ENCODE measurements at regions of chr7 and their contacts with region 1.

Region 1: GRCh38 chr7:65448816-65449504 is 75.3 kb downstream of the ZNF92 start:
- DNase-seq: no peak
- ATAC-seq: peak; percentile 28
- H3K4me3 ChIP-seq: no peak overlapping the region
- H3K4me3 Mint-ChIP-seq: no peak overlapping the region
- H3K27ac ChIP-seq: no peak overlapping the region
- H3K27ac Mint-ChIP-seq: no peak overlapping the region
- H3K4me1 ChIP-seq: peaks cover 0 to 8% of the 10 kb centered on the region in 2 donors
- H3K4me1 Mint-ChIP-seq: peaks cover 25% of the 10 kb centered on the region
- H3K27me3 ChIP-seq: no peaks in the 10 kb centered on the region
- H3K27me3 Mint-ChIP-seq: peaks cover 4% of the 10 kb centered on the region
- CTCF ChIP-seq: no peak

Region 2: DNA sequence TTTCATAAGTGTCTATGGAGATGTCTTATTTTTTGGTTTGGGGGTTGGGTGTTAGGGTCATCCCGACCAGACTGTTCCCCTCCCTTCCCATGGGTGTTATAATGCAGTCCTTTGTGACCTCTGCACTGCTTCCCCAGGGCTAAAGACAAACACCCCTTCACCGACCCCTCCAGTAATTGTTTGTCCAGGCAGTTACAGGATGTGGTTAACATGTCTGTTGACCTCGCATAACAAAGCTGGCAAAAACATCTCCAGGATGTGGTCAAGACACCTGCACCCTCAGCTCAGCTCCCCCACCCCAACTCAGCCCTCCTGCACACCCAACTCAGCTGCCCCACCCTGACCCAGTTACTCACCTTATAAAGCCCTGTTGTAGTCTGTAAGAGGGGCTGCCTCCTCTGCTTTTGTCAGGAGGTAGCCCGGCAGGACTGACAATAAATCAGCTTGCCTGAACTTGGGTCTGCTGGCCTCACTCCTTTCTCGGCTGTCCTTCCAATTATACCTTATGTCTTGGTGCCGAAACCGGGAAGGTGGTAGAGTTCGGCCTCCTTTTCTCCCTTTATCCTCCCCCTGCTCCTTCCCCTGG is 26.9 kb after region 1 on chr7:
- CTCF ChIA-PET with region 1: no interaction called
- POLR2A ChIA-PET with region 1: interaction called, 10 read pairs
- intact Hi-C with region 1: no loop called
- DNase-seq: peak; percentile 68
- ATAC-seq: peak; percentile 90
- H3K4me3 ChIP-seq: peak overlapping the region in 2 of 5 experiments; percentile 8 to 49
- H3K4me3 Mint-ChIP-seq: peak overlapping the region; percentile 73
- H3K27ac ChIP-seq: peak overlapping the region; percentile 77 to 82
- H3K27ac Mint-ChIP-seq: peak overlapping the region; percentile 99
- H3K4me1 ChIP-seq: peaks cover 57 to 76% of the 10 kb centered on the region in 2 donors
- H3K4me1 Mint-ChIP-seq: peaks cover 81% of the 10 kb centered on the region
- H3K27me3 ChIP-seq: no peaks in the 10 kb centered on the region
- H3K27me3 Mint-ChIP-seq: no peaks in the 10 kb centered on the region
- CTCF ChIP-seq: no peak

Region 3: GRCh38 chr7:65509368-65510186 is 60.6 kb after region 1 on chr7:
- CTCF ChIA-PET with region 1: no interaction called
- POLR2A ChIA-PET with region 1: no interaction called
- intact Hi-C with region 1: loop called (anchors 10 kb)
- DNase-seq: peak; percentile 67
- ATAC-seq: no peak
- H3K4me3 ChIP-seq: peak overlapping the region in 4 of 5 experiments; percentile 54 to 69 (median 62)
- H3K4me3 Mint-ChIP-seq: peak overlapping the region; percentile 84
- H3K27ac ChIP-seq: no peak overlapping the region
- H3K27ac Mint-ChIP-seq: peak overlapping the region; percentile 67
- H3K4me1 ChIP-seq: peaks cover 3 to 12% of the 10 kb centered on the region in 2 donors
- H3K4me1 Mint-ChIP-seq: peaks cover 8% of the 10 kb centered on the region
- H3K27me3 ChIP-seq: peaks cover 0 to 25% (median 17%) of the 10 kb centered on the region in 4 experiments
- H3K27me3 Mint-ChIP-seq: peaks cover 19% of the 10 kb centered on the region
- CTCF ChIP-seq: no peak